Activated naive CD4-positive, alpha-beta T cell treated with anti-CD3 and anti-CD28 coated beads, Interleukin-2, amount 10 ng/mL, durations not matched to agents 7 days and 5 days (primary cell): ENCODE measurements at regions of chr2 and their contacts with region 1.

Region 1: DNA sequence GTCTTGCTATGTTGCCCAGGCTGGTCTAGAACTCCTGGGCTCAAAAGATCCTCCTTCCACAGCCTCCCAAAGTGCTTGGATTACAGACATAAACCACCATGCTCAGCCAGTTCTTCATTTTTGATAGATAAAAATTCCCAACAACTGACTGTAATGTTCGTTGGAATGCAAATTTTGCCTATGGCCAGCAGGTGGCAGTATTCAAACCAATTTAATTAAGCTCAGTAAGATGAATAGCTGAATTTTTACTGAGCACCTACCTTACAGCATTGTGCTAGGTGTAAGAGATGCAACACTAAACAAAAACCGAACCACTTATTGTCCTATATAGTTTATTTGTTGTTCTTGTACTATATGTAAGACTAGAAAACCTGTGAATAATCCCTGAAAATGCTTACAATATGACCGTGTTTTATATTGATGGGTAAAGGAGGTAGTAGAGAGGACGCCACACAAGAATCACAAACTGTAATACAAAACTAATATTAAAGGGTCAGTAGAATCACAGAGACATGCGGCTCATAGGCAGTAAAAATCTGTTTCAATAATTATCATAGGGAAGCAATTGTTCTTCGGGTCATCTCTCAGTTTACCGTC is 8.2 kb upstream of the TMEM182 start:
- DNase-seq: peak; percentile 44
- H3K4me3 Mint-ChIP-seq: no peak overlapping the region
- H3K27ac Mint-ChIP-seq: no peak overlapping the region
- H3K4me1 Mint-ChIP-seq: no peaks in the 10 kb centered on the region
- H3K27me3 Mint-ChIP-seq: no peaks in the 10 kb centered on the region

Region 2: DNA sequence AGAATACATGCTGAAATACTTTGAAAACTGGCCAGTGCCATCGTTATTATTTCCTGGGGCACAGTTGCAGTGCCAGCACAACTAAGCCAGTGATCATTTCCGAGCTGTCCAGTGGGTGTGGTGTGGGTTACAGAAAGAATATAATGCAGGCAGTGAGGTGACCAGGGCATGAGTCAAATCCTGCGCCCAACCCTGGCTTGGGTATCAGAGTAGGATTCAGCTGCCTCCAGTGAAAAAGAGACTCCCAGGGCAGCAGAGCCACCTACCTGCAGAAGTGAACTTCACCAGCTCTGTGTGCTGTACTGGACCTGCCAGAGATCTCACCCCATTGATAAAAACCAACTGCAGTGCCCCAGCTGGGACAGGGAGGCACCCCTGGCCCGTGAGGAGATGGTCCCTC is 116.3 kb before region 1 on chr2:
- CTCF ChIA-PET with region 1: no interaction called
- DNase-seq: no peak
- H3K4me3 Mint-ChIP-seq: no peak overlapping the region
- H3K27ac Mint-ChIP-seq: no peak overlapping the region
- H3K4me1 Mint-ChIP-seq: no peaks in the 10 kb centered on the region
- H3K27me3 Mint-ChIP-seq: peaks cover 23% of the 10 kb centered on the region

Region 3: DNA sequence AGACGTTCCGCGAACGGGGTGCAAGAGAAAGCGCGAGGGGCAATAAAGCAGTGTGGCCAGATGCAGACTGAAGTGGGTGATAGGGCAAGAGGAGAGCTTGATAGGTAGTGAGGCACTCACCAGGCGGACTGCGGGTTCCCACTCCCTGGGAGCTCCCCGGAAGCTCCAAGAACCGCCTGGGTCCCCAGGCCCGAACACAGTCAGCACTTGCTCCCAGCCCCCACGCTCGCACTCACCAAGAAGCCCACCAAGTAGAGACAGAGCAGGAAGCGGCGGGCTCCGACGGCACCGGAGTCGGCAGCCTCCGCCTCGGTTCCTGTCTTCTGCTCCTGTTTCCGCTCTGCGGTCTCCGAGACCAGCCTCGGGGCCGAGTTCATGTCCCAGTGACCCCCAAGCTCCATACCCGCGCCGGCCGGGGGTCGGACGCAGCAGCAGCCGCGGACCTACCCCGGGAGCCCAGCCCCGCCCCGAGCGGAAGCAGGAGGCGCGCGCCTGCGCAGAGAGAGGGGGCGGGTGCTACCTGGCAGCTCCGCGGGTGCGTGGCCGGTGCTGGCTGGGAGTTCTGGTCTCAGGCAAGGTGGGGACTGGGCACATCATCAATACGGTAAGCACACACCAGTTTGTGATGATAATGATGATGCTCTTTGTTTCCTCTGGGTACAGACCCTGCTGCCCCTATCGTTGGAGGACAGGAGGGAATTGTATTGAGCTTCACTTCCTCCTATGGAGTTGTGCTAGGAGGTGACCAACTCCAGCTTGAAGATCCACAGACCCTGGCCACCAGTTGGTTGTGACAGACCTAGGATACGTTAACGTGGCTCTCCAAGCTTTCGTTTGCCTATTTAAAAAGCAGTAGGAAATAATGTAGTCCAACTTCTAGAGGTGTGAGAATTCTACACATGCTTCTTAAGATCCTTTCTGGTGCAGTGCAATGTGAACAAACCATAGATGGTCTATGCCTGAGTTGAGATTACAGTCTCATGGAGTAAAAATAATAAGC is 17.0 kb before region 1 on chr2:
- CTCF ChIA-PET with region 1: interaction called, 10 read pairs
- DNase-seq: peak; percentile 89
- H3K4me3 Mint-ChIP-seq: peak overlapping the region; percentile 94
- H3K27ac Mint-ChIP-seq: peak overlapping the region; percentile 72
- H3K4me1 Mint-ChIP-seq: peaks cover 35% of the 10 kb centered on the region
- H3K27me3 Mint-ChIP-seq: no peaks in the 10 kb centered on the region

Region 4: GRCh38 chr2:102806250-102806837 is 52.7 kb after region 1 on chr2:
- CTCF ChIA-PET with region 1: interaction called, 118 read pairs
- DNase-seq: peak; percentile 63
- H3K4me3 Mint-ChIP-seq: no peak overlapping the region
- H3K27ac Mint-ChIP-seq: no peak overlapping the region
- H3K4me1 Mint-ChIP-seq: peaks cover 27% of the 10 kb centered on the region
- H3K27me3 Mint-ChIP-seq: no peaks in the 10 kb centered on the region